Heart right ventricle (tissue), 16 donors: ENCODE measurements at regions of chr10 and their contacts with region 1.

Region 1: GRCh38 chr10:5385224-5385623 is 19.4 kb downstream of the TUBAL3 start:
- DNase-seq: no peak
- ATAC-seq: no peak
- H3K4me3 ChIP-seq: no peak overlapping the region
- H3K27ac ChIP-seq: no peak overlapping the region
- H3K4me1 ChIP-seq: peaks cover 0 to 4% (median 0%) of the 10 kb centered on the region in 9 donors
- H3K27me3 ChIP-seq: no peaks in the 10 kb centered on the region
- CTCF ChIP-seq: no peak

Region 2: GRCh38 chr10:4813023-4813422 is 572.2 kb before region 1 on chr10:
- intact Hi-C with region 1: loop called in 2 of 10 experiments (anchors 10 kb)
- DNase-seq: no peak
- ATAC-seq: no peak
- H3K4me3 ChIP-seq: no peak overlapping the region
- H3K27ac ChIP-seq: no peak overlapping the region
- H3K4me1 ChIP-seq: peaks cover 0 to 27% (median 0%) of the 10 kb centered on the region in 9 donors
- H3K27me3 ChIP-seq: no peaks in the 10 kb centered on the region
- CTCF ChIP-seq: no peak

Region 3: DNA sequence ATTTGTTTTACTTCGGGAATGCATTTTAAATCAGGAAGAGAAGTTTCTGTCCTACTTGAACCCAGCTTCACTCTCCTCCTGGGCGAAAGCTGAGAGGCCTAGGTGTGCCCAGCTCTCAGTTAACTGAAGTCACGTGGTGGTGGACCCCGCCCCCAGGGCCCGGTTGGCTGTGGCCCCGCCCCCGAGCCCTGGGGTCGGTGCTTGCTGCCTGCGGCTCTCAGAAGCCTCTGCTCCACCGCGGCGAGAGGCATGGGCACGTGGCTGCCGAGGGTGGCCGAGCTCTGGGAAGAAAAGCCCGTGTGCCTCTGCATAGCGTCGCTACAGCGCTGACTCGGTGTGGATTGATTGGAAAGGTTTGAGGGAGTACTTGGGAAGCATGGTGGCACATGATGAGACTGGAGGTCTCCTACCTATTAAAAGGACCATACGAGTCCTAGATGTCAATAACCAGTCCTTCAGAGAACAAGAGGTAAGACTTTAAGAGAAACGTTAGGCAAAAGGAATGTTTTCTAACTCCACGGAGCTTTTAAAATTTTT is 61.2 kb after region 1 on chr10:
- intact Hi-C with region 1: no loop called
- DNase-seq: peak; percentile 88 to 89
- ATAC-seq: peak; percentile 95 to 98 (median 97)
- H3K4me3 ChIP-seq: peak overlapping the region; percentile 5 to 64 (median 56)
- H3K27ac ChIP-seq: peak overlapping the region in 9 of 10 donors; percentile 42 to 77 (median 59)
- H3K4me1 ChIP-seq: peaks cover 0 to 43% (median 7%) of the 10 kb centered on the region in 9 donors
- H3K27me3 ChIP-seq: no peaks in the 10 kb centered on the region
- CTCF ChIP-seq: no peak

Region 4: GRCh38 chr10:5488309-5489167 is 103.3 kb after region 1 on chr10:
- intact Hi-C with region 1: no loop called
- DNase-seq: no peak
- ATAC-seq: peak in 3 of 8 donors; percentile 24 to 65 (median 46)
- H3K4me3 ChIP-seq: no peak overlapping the region
- H3K27ac ChIP-seq: no peak overlapping the region
- H3K4me1 ChIP-seq: no peaks in the 10 kb centered on the region
- H3K27me3 ChIP-seq: peaks cover 0 to 16% (median 0%) of the 10 kb centered on the region in 7 donors
- CTCF ChIP-seq: no peak